Common myeloid progenitor, CD34-positive (primary cell): ENCODE measurements at regions of chr7 and their contacts with region 1.

Region 1: DNA sequence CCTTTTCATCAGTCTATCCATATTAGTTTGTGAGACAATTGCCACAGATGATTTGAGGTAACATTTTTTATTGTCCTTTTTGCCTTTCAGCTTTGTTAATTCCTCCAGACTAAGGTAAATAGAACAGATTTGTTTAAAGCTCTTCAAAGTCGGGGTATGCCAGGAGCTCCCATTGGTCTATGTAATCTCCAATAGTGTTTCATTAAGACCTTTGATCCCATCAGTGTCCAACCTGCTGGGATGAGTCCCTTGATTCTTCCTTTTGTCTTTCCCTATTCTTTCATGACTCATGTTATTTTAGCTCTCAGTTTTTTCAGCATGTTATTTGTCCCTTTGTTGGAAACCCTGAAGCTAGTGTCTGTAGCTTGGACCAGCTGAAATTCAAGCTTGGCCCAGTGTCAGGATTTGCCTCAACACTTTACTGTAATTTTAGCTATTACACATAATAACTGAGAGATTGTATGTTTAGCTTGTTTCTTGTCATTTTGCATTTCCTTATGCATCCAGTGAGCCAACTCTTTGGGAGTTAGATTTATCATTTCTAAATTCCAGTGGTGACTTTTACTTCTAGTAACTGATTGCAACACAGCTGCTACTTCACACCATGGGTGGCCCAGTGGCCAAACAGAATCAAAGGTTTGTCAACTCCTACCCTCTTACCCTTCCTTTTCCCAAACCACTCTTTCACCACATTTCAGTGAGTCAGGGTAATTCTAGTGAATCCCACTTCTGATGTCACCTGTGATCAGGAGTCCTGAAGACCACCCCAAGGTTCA is 15.3 kb downstream of the AGBL3 start:
- DNase-seq: no peak
- H3K4me3 ChIP-seq: no peak overlapping the region
- H3K27ac ChIP-seq: no peak overlapping the region
- H3K4me1 ChIP-seq: no peaks in the 10 kb centered on the region
- H3K27me3 ChIP-seq: no peaks in the 10 kb centered on the region

Region 2: GRCh38 chr7:134891262-134891695 is 110.3 kb before region 1 on chr7:
- CTCF ChIA-PET with region 1: no interaction called
- POLR2A ChIA-PET with region 1: no interaction called
- DNase-seq: peak in 2 of 3 donors; percentile 5 to 8
- H3K4me3 ChIP-seq: peak overlapping the region; percentile 19 to 67 (median 28)
- H3K27ac ChIP-seq: no peak overlapping the region
- H3K4me1 ChIP-seq: peaks cover 0 to 6% (median 4%) of the 10 kb centered on the region in 4 experiments
- H3K27me3 ChIP-seq: peaks cover 0 to 31% (median 11%) of the 10 kb centered on the region in 5 experiments

Region 3: DNA sequence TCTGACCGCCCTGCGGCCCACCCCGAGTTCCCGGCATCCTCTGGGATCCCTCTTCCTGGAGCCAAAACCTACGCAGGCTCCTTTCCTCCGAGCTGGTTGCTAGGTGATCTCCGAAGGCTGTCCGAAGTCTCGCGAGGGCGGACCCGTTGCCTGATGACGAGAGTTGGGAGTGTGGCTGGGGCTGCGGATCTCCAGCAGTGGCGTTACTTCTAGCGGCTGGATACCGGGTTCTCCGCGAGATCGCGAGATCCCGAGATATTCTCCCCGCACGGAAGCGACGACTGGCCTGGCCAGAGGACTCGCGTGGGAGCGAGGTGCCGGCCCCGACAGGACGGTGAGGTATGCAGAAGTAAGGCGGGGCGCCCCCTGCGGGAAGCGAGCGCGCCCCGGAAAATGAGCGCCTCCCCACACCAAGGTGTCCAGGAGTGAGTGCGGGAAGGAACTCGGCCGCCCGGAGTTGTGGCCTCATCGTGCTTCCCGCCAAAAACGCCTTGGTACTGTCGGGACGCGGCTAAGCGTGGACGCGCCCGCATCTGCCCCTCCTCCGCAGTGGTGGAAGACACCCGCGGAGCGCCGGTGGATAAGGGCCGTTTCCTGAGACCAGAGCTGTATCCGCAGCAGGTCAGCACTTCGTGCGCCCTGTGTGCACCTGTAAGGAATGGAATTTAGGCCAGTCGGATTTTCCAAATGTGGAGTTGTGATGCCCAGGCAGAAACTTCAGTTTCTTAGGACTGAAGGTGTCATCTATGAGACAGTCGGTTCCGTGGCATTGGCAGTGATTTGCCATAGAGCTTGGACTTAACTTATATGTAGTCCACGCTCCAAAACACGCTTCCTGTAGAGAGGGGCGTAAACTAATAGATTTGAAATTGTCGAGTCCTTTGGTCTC is 15.0 kb before region 1 on chr7 and contains the start of gene AGBL3:
- CTCF ChIA-PET with region 1: interaction called, 10 read pairs
- POLR2A ChIA-PET with region 1: no interaction called
- DNase-seq: peak; percentile 92 to 94 (median 94)
- H3K4me3 ChIP-seq: peak within 1 kb of the TSS; percentile 85 to 99 (median 95)
- H3K27ac ChIP-seq: peak within 1 kb of the TSS; percentile 87 to 95
- H3K4me1 ChIP-seq: peaks cover 0 to 12% (median 2%) of the 10 kb centered on the region in 4 experiments
- H3K27me3 ChIP-seq: no peaks in the 10 kb centered on the region

Region 4: DNA sequence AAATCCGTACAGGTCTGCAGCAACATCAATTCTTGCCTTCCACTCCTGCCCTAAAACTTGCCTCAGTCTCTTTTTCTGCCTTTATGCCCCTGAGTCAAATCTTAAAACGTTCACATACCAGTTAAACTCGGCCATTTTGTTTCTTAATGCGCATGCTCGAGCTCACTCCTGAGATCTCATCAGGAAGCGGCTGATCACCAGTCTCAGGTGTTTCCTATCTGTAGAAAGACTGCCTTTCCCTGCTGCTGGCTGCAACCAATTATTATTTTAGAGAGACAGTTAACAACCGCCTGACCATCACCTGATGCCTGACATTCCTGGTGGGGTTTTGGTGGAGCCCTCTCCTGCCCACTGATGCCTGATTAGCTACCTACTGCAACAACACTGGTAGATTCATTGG is 76.1 kb after region 1 on chr7:
- CTCF ChIA-PET with region 1: no interaction called
- POLR2A ChIA-PET with region 1: no interaction called
- DNase-seq: no peak
- H3K4me3 ChIP-seq: no peak overlapping the region
- H3K27ac ChIP-seq: no peak overlapping the region
- H3K4me1 ChIP-seq: no peaks in the 10 kb centered on the region
- H3K27me3 ChIP-seq: no peaks in the 10 kb centered on the region